Activated CD4-positive, alpha-beta T cell treated with anti-CD3 and anti-CD28 coated beads, Interleukin-2, amount 10 ng/mL, durations not matched to agents 7 days and 5 days (primary cell): ENCODE measurements at regions of chr14 and their contacts with region 1.

Region 1: DNA sequence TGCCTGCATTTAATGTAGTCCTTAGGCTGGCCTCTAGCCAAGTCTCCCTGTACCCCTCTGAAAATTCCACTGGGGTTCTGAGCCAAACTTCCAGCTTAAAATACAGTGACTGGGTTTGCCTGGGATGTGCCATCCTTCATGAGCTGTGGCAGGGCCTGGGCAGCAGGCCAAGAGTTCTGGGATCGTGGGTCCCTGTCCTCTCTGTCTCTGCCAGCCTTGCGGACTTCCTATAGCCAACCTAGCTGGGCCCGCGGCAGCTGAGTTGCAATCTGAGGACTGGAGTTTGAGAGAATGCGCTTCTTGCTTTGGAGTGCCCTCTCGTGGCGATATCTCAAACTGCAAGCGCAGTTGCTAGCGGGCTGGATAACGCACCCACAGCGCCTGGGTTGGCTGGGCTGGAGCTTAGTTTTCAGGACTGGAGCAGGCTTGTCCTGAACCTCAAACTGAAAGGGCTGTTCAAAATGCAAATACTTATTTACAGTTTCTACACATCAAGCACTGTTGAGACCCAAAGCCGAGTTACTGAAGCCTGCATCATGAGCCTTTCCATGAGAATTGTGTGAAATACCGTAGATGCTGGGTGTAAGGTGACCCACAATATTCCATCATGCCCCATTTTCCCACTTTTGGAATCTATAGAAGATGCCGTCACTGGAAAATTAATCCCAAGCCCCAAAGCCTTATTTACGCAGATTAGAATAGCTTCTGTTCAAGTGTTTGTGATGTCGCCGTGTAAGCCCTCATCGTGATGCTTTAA is 7.3 kb upstream of the IFI27L2 start:
- DNase-seq: peak; percentile 88
- H3K4me3 Mint-ChIP-seq: no peak overlapping the region
- H3K27ac Mint-ChIP-seq: no peak overlapping the region
- H3K4me1 Mint-ChIP-seq: peaks cover 10% of the 10 kb centered on the region
- H3K27me3 Mint-ChIP-seq: peaks cover 26% of the 10 kb centered on the region

Region 2: GRCh38 chr14:94026173-94026888 is 110.4 kb before region 1 on chr14 and contains the start of gene OTUB2:
- CTCF ChIA-PET with region 1: interaction called, 11 read pairs
- POLR2A ChIA-PET with region 1: interaction called, 3 read pairs
- DNase-seq: peak; percentile 97
- H3K4me3 Mint-ChIP-seq: peak within 1 kb of the TSS; percentile 73
- H3K27ac Mint-ChIP-seq: peak within 1 kb of the TSS; percentile 71
- H3K4me1 Mint-ChIP-seq: peaks cover 49% of the 10 kb centered on the region
- H3K27me3 Mint-ChIP-seq: no peaks in the 10 kb centered on the region
- total RNA-seq, gene OTUB2: 2.3 to 2.4 TPM

Region 3: DNA sequence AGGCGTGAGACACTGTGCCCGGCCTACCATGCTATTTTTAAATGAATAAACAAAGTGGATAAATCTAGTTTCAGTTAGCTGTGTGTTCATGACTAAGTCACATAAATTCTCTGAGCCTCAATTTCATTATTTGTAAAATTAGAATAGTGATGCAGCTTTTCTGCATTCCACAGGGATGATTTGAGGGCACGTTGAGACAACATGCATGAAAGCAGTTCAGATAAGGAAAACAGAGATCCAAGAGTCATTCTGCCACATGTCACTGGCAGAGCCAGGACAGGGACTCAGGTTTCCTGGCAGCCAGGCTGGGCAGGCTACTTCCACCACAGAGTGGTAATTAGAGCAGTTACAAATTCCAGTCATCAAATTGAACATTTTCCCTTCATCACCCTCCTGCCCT is 34.5 kb after region 1 on chr14:
- CTCF ChIA-PET with region 1: interaction called, 15 read pairs
- POLR2A ChIA-PET with region 1: no interaction called
- DNase-seq: no peak
- H3K4me3 Mint-ChIP-seq: no peak overlapping the region
- H3K27ac Mint-ChIP-seq: no peak overlapping the region
- H3K4me1 Mint-ChIP-seq: peaks cover 22% of the 10 kb centered on the region
- H3K27me3 Mint-ChIP-seq: peaks cover 48% of the 10 kb centered on the region